Endothelial cell of umbilical vein (primary cell): ENCODE measurements at regions of chr9 and their contacts with region 1.

Region 1: DNA sequence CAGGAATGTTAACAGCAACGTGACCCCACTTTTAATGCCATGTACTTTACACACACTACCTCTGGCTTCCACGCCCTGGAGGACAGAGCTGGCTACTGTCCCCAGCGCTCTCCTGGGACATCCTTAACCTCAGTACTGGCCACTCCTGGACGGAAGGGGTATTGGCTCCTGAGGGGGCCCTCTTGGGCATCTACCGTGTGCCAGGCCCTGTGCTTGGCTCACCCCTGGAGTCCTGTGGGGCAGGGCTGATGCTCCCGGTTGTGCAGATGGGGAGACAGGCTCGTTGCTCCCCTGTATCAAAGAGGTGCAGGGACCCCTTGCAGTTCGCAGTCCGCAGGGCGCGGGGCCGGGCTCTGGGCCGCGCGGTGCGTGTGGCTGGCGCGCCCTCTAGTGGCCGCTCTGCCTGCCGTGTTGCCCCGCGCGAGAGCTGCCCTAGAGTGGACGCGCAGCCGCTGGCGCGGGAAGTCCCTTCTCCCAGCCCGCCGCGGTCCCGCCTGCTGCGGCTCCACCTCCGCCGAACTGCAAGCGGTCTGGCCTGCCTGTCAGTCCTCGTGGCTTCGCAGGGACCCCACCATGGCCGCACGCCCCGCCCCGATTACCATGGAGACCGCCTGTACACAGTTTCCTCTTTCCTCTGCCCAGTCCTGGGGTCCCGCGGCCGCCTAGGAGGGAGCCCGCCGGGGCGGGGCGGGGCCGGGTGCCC is at the start of gene WDR38:
- DNase-seq: peak; percentile 65
- H3K4me3 ChIP-seq: peak within 1 kb of the TSS; percentile 2 to 38 (median 32)
- H3K27ac ChIP-seq: no peak within 1 kb of the TSS
- H3K4me1 ChIP-seq: peaks cover 3% of the 10 kb centered on the region
- H3K27me3 ChIP-seq: peaks cover 0 to 2% of the 10 kb centered on the region in 2 experiments
- CTCF ChIP-seq: peak; percentile 80 to 94
- POLR2A ChIP-seq: no peak
- total RNA-seq, gene WDR38: not detected in 2 replicates

Region 2: DNA sequence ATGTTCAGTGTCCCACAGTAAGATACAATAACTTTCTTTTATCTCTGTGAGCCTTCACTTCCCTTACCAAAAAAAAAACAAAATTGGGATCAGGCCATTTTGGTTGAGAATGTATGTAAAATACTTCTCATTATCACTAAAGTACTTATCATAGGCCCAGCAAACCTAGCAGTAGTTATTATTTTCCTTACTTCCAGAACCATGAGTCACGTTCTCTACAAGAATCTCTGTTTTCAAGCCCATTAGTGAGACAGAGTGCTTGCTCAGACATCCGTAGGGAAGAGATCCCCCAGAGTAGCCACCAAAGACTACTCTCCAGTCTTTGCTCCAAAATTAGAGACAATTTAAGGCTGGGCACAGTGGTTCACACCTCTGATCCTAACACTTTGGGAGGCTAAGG is 241.9 kb before region 1 on chr9:
- CTCF ChIA-PET with region 1: no interaction called
- POLR2A ChIA-PET with region 1: no interaction called
- dilution Hi-C with region 1: no loop called
- intact Hi-C with region 1: no loop called
- DNase-seq: no peak
- H3K4me3 ChIP-seq: no peak overlapping the region
- H3K27ac ChIP-seq: no peak overlapping the region
- H3K4me1 ChIP-seq: no peaks in the 10 kb centered on the region
- H3K27me3 ChIP-seq: peaks cover 13 to 23% of the 10 kb centered on the region in 2 experiments
- CTCF ChIP-seq: no peak
- POLR2A ChIP-seq: no peak

Region 3: DNA sequence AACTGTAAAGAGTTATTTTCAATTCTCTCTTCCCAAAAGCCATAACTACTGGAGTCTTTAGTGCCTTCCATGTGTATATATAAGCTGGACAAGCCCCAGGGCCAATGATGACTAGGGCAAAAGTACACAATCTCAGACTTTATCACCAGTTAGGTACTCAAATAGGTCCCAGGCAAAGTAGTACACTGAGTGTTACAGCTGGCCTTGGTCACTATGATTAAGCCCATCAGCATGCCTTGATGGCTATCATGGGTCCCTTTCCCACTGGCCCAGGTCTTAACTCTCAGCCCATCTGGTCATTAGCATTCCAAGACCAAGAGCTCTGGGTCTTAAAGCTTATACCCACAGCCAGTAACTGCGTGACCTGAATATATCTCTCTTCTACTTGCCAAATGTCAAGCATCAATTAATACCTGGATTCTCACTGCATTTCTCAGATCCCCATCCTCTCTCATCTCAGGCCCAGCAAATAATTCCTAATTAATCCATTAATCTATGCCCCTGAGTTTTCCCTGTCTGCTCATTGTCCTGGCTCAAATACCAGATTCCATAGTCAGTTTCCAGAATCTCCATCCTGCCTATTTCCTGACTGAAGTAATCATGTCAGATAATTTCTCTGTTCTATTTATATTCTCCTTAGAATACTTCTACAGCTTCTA is 144.2 kb before region 1 on chr9:
- CTCF ChIA-PET with region 1: interaction called, 5 read pairs
- POLR2A ChIA-PET with region 1: no interaction called
- dilution Hi-C with region 1: no loop called
- intact Hi-C with region 1: loop called (anchors 1 kb)
- DNase-seq: peak; percentile 14
- H3K4me3 ChIP-seq: no peak overlapping the region
- H3K27ac ChIP-seq: no peak overlapping the region
- H3K4me1 ChIP-seq: peaks cover 9% of the 10 kb centered on the region
- H3K27me3 ChIP-seq: no peaks in the 10 kb centered on the region
- CTCF ChIP-seq: no peak
- POLR2A ChIP-seq: no peak

Region 4: GRCh38 chr9:124782661-124783574 is 70.1 kb before region 1 on chr9:
- CTCF ChIA-PET with region 1: interaction called, 967 read pairs
- POLR2A ChIA-PET with region 1: interaction called, 4 read pairs
- dilution Hi-C with region 1: no loop called
- intact Hi-C with region 1: no loop called
- DNase-seq: no peak
- H3K4me3 ChIP-seq: no peak overlapping the region
- H3K27ac ChIP-seq: no peak overlapping the region
- H3K4me1 ChIP-seq: peaks cover 10% of the 10 kb centered on the region
- H3K27me3 ChIP-seq: no peaks in the 10 kb centered on the region
- CTCF ChIP-seq: no peak
- POLR2A ChIP-seq: no peak

Region 5: GRCh38 chr9:124800306-124801259 is 52.4 kb before region 1 on chr9:
- CTCF ChIA-PET with region 1: interaction called, 40 read pairs
- POLR2A ChIA-PET with region 1: no interaction called
- dilution Hi-C with region 1: no loop called
- intact Hi-C with region 1: no loop called
- DNase-seq: peak; percentile 63
- H3K4me3 ChIP-seq: no peak overlapping the region
- H3K27ac ChIP-seq: no peak overlapping the region
- H3K4me1 ChIP-seq: peaks cover 19% of the 10 kb centered on the region
- H3K27me3 ChIP-seq: peaks cover 10 to 12% of the 10 kb centered on the region in 2 experiments
- CTCF ChIP-seq: no peak
- POLR2A ChIP-seq: no peak

Region 6: DNA sequence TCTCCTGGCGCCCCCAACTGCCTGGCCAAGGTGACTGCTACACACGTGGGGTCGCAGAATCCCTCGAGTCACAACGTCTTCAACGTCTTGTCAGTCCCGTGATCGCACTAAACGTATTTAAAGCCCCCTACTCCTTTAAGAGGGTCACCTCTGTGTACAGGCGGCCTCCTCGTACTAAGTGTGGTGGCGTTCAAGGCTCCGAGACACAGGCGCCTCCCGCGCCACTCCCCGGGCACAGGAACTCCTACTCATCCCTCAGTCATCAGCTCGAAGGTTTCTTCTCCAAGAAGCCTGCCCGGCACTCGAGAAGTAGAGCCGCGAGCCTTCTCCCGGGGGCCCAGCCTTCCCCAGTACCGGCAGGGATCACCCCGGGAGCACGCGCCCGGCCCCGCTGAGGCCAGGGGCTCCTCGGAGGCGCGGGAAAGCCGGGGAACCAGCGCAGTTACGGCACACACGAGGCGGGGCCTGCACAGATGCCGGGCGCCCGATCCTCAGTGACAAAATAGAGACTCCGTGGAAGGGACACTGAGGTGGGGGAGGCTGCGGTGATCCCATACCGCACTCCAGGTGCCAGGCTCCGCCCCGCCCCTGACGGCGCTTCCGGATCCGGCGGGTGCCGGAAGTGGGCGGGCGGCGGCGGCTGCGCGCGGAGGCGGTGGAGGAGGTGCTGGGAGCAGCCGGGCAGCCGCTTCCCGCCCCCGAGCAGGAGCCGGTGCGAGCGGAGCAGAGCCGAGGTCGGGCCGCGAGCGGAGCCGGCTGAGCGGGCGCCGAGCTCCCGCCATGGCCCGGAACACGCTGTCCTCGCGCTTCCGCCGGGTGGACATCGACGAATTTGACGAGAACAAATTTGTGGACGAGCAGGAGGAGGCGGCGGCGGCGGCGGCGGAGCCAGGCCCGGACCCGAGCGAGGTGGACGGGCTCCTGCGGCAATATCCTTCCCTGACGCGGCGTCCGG is 15.8 kb after region 1 on chr9:
- CTCF ChIA-PET with region 1: interaction called, 35 read pairs
- POLR2A ChIA-PET with region 1: no interaction called
- dilution Hi-C with region 1: no loop called
- intact Hi-C with region 1: no loop called
- DNase-seq: peak; percentile 82
- H3K4me3 ChIP-seq: peak overlapping the region; percentile 31 to 97 (median 79)
- H3K27ac ChIP-seq: peak overlapping the region; percentile 75
- H3K4me1 ChIP-seq: peaks cover 35% of the 10 kb centered on the region
- H3K27me3 ChIP-seq: no peaks in the 10 kb centered on the region
- CTCF ChIP-seq: no peak
- POLR2A ChIP-seq: peak; percentile 92

Region 7: GRCh38 chr9:125374443-125375309 is 521.7 kb after region 1 on chr9:
- CTCF ChIA-PET with region 1: interaction called, 10 read pairs
- POLR2A ChIA-PET with region 1: no interaction called
- dilution Hi-C with region 1: no loop called
- intact Hi-C with region 1: loop called (anchors 1 kb)
- DNase-seq: peak; percentile 66
- H3K4me3 ChIP-seq: no peak overlapping the region
- H3K27ac ChIP-seq: no peak overlapping the region
- H3K4me1 ChIP-seq: no peaks in the 10 kb centered on the region
- H3K27me3 ChIP-seq: peaks cover 0 to 4% of the 10 kb centered on the region in 2 experiments
- CTCF ChIP-seq: peak; percentile 69 to 76
- POLR2A ChIP-seq: no peak